GM18951 (cell line): ENCODE measurements at regions of chr6 and their contacts with region 1.

Region 1: GRCh38 chr6:17086469-17086868 is 15.4 kb upstream of the STMND1 start:
- POLR2A ChIP-seq: no peak

Region 2: DNA sequence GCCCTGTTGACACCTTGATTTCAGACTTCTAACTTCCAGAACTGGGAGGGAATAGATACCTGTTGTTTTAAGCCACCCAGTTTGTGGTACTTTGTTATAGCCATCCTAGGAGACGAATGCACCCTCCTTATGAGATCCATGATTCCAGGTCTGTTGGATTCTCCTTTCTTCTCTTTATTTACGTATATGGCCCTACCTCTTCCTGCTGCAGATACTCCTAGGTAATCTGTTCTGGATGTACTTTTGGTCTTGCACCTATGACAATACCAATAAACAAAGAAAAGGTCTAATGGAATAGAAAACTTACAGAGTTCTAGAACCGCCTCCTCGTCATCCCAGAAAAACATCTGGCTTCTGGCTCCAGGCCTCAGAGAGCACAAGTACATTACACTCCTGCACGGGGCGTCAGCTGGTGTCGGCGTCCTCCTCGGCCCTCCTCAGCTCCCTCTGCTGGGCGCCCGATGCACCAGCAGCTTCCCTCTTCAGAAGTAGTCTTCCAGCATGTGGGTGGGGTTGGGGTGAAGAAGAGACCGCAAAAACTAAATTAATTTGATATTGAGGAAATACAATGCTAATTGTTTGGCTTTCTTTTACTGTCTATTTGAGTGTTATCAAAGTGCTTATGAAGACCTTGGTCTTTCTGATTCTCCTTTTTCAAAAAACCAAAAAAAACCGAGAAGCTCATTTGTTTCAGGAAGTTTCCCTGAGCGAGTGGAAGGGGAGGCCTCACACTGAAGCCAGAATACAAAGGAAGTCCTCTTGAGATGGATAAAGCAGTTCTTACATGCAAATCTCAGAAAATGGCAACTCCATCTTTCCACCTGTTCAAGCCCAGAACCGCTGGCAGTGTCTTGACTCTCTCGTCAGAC is 315.5 kb before region 1 on chr6:
- in situ Hi-C with region 1: loop called (anchors 10 kb)
- POLR2A ChIP-seq: no peak

Region 3: GRCh38 chr6:17484201-17484849 is 397.9 kb after region 1 on chr6:
- in situ Hi-C with region 1: no loop called
- POLR2A ChIP-seq: no peak